Heart right ventricle (tissue), 16 donors: ENCODE measurements at regions of chr1 and their contacts with region 1.

Region 1: DNA sequence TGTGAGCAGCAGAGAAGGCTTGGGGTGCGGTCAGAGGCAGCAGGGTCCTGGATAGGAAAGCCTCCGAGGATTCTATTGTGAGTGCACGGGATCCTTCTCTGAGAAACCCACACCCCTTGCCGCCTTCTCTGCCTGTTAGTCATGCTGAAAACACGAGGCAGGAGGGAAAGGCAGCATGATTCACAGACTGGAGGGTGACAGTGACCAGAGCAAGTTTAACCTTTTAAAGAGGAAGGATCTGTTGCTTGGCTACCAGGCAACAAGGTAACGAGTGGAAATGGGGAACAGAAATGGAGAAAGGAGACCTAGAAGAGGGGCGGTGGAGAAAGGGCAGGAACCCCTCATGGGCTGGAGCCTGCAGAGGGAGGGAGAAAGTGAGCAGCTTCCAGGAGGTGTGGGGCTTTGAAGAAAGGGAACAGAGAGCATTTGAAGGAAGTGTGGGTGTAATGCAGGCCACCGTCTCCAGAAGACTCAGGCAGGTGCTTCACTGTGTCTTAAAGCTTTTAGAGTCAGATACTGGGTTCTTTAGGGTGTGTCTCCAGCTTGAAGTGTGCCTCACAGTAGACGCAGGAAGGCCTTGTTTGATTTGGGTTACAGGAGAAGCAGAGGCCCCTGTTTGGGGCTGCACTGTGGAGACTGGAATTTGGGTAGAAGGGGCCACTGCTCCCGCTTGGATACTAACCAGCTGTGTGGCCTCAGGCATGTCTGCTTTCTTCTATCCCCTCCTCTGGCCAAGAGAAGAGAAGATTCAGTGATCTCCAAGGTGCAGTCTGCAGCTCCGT is 19.1 kb downstream of the OPTC start:
- DNase-seq: peak in 1 of 2 donors; percentile 46
- ATAC-seq: peak in 7 of 8 donors; percentile 14 to 80 (median 40)
- H3K4me3 ChIP-seq: no peak overlapping the region
- H3K27ac ChIP-seq: peak overlapping the region in 9 of 10 donors; percentile 46 to 91 (median 70)
- H3K4me1 ChIP-seq: peaks cover 19 to 67% (median 42%) of the 10 kb centered on the region in 9 donors
- H3K27me3 ChIP-seq: no peaks in the 10 kb centered on the region
- CTCF ChIP-seq: no peak

Region 2: GRCh38 chr1:203440771-203441170 is 72.2 kb before region 1 on chr1:
- intact Hi-C with region 1: no loop called
- DNase-seq: peak; percentile 69 to 73
- ATAC-seq: peak; percentile 91 to 97 (median 93)
- H3K4me3 ChIP-seq: no peak overlapping the region
- H3K27ac ChIP-seq: peak overlapping the region in 4 of 10 donors; percentile 20 to 70 (median 45)
- H3K4me1 ChIP-seq: peaks cover 7 to 31% (median 9%) of the 10 kb centered on the region in 9 donors
- H3K27me3 ChIP-seq: no peaks in the 10 kb centered on the region
- CTCF ChIP-seq: peak; percentile 40 to 77 (median 67)

Region 3: GRCh38 chr1:203549309-203549708 is 36.3 kb after region 1 on chr1:
- intact Hi-C with region 1: loop called in 1 of 10 experiments (anchors 5 kb)
- DNase-seq: no peak
- ATAC-seq: no peak
- H3K4me3 ChIP-seq: no peak overlapping the region
- H3K27ac ChIP-seq: peak overlapping the region in 2 of 10 donors; percentile 21 to 23
- H3K4me1 ChIP-seq: peaks cover 0 to 34% (median 9%) of the 10 kb centered on the region in 9 donors
- H3K27me3 ChIP-seq: no peaks in the 10 kb centered on the region
- CTCF ChIP-seq: no peak